ENCODE measurements at regions of chr22 and their contacts with region 1.

Region 1: DNA sequence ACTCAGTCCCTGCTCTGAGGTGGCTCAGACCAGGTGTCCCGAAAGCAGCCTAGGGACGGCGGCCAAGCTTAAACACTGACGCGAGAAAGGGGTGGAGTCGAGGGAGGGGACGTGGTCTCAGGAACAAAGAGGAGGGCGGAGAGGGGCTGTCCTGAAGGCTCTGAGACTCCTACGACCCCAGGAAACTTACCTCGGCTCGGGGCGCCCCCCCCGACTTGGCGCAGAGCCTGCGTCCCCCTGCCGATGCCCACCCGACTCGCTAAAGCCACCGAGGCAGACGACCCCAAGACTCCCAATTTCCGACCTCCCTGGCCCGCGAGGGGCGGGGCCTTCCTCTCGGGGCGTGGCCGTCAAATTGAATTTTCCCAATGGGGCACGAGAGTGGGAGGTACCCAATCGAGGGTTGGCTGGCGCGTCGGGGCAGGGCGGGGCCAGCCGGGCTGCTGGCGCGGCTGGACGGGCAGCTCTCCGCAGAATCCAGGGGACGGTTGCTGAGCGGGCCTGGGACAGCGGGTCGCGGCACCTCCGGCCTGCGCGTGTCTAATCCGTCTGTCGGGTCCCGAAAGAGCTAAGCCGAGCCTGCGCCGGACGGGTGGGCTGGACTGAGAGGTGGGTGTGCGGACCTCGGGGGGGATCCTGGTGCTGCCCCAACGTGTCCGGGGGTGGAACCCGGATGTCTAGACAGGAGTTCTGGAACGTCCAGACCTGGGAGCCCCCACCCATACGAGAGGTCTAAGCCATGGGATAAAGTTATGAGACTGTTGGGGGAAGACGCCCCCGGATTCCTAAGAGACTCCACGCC is at the start of gene SMTN:
- DNase-seq: peak; percentile 87 to 91 (median 89)
- H3K4me3 ChIP-seq: peak within 1 kb of the TSS; percentile 67 to 88 (median 86)
- H3K27ac ChIP-seq: peak within 1 kb of the TSS; percentile 72 to 79
- H3K4me1 ChIP-seq: peaks cover 2 to 49% (median 45%) of the 10 kb centered on the region in 4 experiments
- H3K27me3 ChIP-seq: no peaks in the 10 kb centered on the region

Region 2: DNA sequence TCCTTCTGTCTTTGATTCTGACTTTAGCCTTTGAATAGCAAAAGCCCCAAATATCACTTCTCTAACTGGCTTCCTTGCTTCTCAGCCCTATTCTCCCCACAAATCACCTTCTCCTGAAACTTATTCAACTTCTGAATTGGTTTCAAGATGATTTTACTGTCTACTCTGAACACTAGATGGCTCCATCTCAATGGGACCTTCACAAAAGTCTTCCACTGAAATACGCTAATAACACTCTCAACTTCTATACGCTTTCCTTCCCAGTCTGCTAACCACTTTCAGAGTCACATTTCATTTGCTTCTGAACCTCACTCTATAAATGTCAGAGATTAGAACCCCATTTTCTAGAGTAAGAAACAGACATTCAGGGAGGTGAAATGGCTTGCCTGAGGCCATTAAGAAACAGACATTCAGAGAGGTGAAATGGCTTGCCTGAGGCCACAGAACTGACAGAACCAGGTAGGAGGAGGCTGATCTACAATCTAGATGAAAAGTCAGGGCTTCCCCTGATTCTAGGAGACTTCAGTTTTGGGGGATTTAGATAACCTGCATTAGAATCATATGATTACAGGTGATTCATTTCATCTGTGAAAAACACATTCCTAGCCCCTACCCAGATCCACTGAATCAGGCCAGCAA is 133.1 kb before region 1 on chr22:
- CTCF ChIA-PET with region 1: interaction called, 48 read pairs
- POLR2A ChIA-PET with region 1: no interaction called
- DNase-seq: peak; percentile 52 to 71 (median 68)
- H3K4me3 ChIP-seq: no peak overlapping the region
- H3K27ac ChIP-seq: no peak overlapping the region
- H3K4me1 ChIP-seq: peaks cover 0 to 11% (median 3%) of the 10 kb centered on the region in 4 experiments
- H3K27me3 ChIP-seq: no peaks in the 10 kb centered on the region

Region 3: DNA sequence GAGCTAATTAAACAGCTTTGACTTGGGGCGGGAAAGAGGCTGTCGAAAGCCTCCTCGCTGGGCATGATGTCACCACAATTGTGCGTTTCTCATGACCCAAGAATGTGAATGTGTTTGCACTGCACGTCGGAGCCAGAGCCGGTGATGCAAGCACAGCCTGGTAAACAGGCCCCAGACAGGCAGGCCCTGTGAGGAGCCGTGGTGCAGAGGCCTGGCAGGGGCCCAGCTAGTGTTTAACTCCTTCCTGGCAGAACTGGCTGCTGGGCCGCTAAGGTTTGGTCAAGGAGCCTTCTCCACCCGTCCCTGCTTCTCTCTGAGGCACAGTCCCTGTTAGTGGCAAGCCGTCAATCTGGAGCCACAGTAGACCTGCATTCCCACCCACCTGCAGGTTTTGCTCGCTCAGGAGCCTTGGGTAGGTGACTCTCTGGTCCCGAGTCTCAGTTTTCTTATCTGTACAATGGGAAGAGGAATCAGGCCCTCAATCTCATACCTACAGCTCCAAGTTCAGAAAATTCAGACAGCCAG is 25.4 kb before region 1 on chr22:
- CTCF ChIA-PET with region 1: no interaction called
- POLR2A ChIA-PET with region 1: no interaction called
- DNase-seq: no peak
- H3K4me3 ChIP-seq: no peak overlapping the region
- H3K27ac ChIP-seq: no peak overlapping the region
- H3K4me1 ChIP-seq: peaks cover 0 to 12% (median 1%) of the 10 kb centered on the region in 4 experiments
- H3K27me3 ChIP-seq: no peaks in the 10 kb centered on the region

Region 4: GRCh38 chr22:31122532-31123291 is 41.7 kb after region 1 on chr22 and contains the start of gene INPP5J:
- CTCF ChIA-PET with region 1: no interaction called
- POLR2A ChIA-PET with region 1: no interaction called
- DNase-seq: no peak
- H3K4me3 ChIP-seq: no peak within 1 kb of the TSS
- H3K27ac ChIP-seq: no peak within 1 kb of the TSS
- H3K4me1 ChIP-seq: peaks cover 0 to 5% (median 3%) of the 10 kb centered on the region in 4 experiments
- H3K27me3 ChIP-seq: no peaks in the 10 kb centered on the region

Measured in common myeloid progenitor, CD34-positive (primary cell).